Natural killer cell (primary cell): ENCODE measurements at regions of chr16 and their contacts with region 1.

Region 1: DNA sequence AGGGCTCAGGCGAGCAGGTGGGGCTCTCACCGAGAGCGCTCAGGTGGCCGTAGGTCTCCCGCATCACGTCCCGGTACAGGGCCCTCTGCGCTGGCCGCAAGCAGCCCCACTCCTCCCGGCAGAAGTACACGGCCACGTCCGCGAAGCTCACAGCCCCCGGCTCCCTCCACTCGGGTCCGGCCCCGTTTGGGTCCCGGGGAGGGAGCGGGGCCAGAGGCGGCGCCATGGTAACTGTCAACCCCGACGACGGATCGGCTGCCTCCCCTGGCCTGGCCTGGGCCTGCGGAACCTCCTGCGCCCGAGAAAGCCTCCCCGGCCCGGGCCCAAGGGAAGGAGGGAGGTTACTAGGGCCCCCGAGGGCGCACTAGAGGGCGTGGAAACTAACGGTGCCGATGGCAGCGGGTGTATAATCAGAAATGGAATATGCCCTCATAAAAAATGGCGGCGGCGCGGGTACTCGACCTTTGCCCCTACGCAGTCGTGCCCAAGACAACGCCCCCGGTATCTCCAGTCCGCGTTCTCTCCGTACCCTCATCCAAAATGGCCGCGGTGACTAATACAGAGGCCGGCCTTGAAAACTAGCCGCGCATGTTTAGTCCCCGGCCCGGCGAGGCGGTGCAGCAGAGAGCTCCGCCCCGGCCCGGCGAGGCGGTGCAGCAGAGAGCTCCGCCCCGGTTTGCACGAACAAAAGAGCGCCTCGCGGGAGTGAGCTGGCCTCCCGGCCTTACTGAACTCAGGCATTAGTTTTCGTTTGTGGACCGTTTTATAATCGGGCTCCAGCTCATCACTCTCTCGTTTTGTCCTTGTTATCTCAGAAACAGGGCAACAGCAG is at the start of gene ZNF764:
- DNase-seq: peak; percentile 91 to 97
- ATAC-seq: peak; percentile 93 to 98 (median 93)
- H3K4me3 ChIP-seq: peak within 1 kb of the TSS; percentile 77
- H3K4me3 Mint-ChIP-seq: peak within 1 kb of the TSS; percentile 89
- H3K27ac ChIP-seq: peak within 1 kb of the TSS; percentile 90
- H3K27ac Mint-ChIP-seq: peak within 1 kb of the TSS; percentile 89 to 94
- H3K4me1 ChIP-seq: peaks cover 57% of the 10 kb centered on the region
- H3K4me1 Mint-ChIP-seq: peaks cover 31 to 32% of the 10 kb centered on the region in 2 donors
- H3K27me3 ChIP-seq: no peaks in the 10 kb centered on the region
- H3K27me3 Mint-ChIP-seq: peaks cover 0 to 4% of the 10 kb centered on the region in 2 donors
- CTCF ChIP-seq: no peak
- total RNA-seq, gene ZNF764: 9.6 to 13.0 (median 11.7) TPM

Region 2: DNA sequence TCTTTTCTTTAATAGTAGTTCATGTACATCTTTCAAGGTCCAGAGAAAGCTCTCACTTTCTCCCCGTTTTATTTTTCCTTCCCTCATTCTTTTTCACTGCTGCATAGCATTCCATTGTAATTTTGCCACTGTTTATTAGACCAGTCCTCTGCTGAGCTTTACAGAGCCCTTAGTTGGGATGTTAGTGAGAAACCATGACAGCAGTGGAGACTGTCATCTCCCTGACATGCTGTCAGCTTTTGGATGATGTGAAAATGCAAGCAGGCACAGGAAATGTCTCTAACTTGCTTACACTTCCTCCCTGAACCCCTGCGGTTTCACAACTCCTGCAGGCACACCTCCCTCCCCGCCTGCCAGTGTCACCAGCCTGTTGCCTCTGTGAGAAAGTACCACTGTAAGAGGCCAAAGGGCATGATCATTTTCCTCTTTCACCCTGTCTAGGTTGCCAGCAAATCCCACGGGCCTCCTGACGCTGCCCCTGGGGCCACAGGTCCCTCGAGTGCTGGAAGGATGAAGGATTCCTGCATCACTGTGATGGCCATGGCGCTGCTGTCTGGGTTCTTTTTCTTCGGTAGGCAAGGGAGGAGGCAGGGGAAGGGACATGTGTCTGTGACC is 85.7 kb before region 1 on chr16 and contains the start of gene ITGAL:
- intact Hi-C with region 1: no loop called
- DNase-seq: peak; percentile 77 to 93
- ATAC-seq: peak; percentile 75 to 90 (median 86)
- H3K4me3 ChIP-seq: peak within 1 kb of the TSS; percentile 53
- H3K4me3 Mint-ChIP-seq: peak within 1 kb of the TSS; percentile 98
- H3K27ac ChIP-seq: peak within 1 kb of the TSS; percentile 88
- H3K27ac Mint-ChIP-seq: peak within 1 kb of the TSS; percentile 95 to 96
- H3K4me1 ChIP-seq: peaks cover 79% of the 10 kb centered on the region
- H3K4me1 Mint-ChIP-seq: peaks cover 54 to 64% of the 10 kb centered on the region in 2 donors
- H3K27me3 ChIP-seq: no peaks in the 10 kb centered on the region
- H3K27me3 Mint-ChIP-seq: no peaks in the 10 kb centered on the region
- CTCF ChIP-seq: no peak
- total RNA-seq, gene ITGAL: 1,131 to 1,260 (median 1,176) TPM

Region 3: DNA sequence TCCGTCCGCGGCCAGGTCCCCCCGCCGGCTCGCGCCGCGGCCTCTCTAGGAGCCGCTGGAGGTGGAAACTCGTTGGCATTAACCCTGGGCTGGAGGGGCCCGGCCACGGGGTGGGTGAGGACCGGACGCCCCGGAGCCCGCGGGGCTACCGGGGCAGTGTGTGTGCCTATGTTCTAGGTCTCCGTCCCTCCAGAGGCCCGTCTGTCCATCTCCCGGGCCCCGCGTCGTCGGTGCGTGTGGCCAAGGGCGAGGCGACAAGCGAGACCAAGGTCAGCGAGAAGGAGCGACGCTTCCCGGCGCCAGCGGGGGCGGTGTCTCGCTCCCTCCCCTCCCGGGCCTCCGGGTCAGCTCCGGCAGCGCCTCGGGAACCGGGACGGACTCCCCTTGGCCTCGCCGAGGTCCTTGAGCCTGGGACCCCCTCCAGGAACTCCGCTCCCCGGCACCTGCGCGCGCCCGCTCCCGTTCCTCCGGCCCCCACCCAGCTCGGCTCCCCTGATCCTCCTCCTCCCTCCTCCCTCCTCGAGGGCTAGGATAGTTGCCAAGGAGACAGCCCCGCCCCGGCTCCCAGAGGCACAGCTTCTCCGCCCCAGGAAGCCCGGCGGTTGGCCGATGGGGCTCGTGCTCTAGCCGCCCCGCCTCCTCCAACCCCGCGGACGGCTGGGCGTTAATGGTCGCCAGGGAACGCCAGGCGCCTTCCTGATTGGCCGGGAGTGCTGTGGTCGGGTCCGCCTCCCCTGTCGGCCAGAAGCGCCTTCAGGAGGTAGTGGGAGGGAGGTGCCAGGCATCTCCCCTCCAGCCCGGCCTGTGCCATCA is 31.1 kb before region 1 on chr16:
- intact Hi-C with region 1: loop called (anchors 2 kb)
- DNase-seq: peak; percentile 75 to 89
- ATAC-seq: peak; percentile 79 to 90 (median 82)
- H3K4me3 ChIP-seq: peak overlapping the region; percentile 81
- H3K4me3 Mint-ChIP-seq: peak overlapping the region; percentile 84
- H3K27ac ChIP-seq: peak overlapping the region; percentile 75
- H3K27ac Mint-ChIP-seq: peak overlapping the region; percentile 67 to 88
- H3K4me1 ChIP-seq: peaks cover 18% of the 10 kb centered on the region
- H3K4me1 Mint-ChIP-seq: peaks cover 14 to 24% of the 10 kb centered on the region in 2 donors
- H3K27me3 ChIP-seq: no peaks in the 10 kb centered on the region
- H3K27me3 Mint-ChIP-seq: no peaks in the 10 kb centered on the region
- CTCF ChIP-seq: no peak

Region 4: DNA sequence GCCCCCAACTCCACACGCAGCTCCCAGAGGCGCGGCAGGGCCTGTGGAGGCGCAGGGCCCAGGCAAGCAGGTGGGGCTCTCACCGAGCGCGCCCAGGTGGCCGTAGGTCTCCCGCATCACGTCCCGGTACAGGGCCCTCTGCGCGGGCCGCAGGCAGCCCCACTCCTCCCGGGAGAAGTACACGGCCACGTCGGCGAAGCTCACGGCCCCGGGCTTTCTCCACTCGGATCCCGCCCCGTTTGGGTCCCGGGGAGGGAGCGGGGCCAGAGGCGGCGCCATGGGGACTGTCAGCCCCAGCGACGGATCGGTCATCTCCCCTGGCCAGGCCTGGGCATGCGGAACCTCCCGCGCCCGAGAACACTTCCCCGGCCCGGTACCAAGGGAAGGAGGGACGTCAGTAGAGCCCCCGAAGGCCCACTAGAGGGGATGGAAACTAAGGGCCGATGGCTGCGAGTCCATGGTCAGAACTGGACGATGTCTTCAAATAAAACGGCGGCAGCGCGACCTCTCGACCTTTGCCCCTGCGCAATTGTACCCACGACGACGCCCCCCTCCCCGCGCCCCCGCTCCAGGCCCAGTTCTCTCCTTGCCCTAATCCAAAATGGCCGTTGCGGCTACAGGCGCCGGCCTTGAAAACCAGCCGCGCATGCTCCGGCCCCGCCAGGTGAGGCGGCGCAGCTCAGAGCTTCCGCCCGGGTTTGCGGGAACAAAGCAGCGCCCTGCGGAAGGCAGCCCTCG is 23.6 kb before region 1 on chr16 and contains the start of gene ZNF747:
- intact Hi-C with region 1: loop called (anchors 1 kb)
- DNase-seq: peak; percentile 86 to 96
- ATAC-seq: peak; percentile 86 to 93 (median 89)
- H3K4me3 ChIP-seq: peak within 1 kb of the TSS; percentile 87
- H3K4me3 Mint-ChIP-seq: peak within 1 kb of the TSS; percentile 96
- H3K27ac ChIP-seq: peak within 1 kb of the TSS; percentile 94
- H3K27ac Mint-ChIP-seq: peak within 1 kb of the TSS; percentile 83 to 95
- H3K4me1 ChIP-seq: peaks cover 38% of the 10 kb centered on the region
- H3K4me1 Mint-ChIP-seq: peaks cover 22 to 30% of the 10 kb centered on the region in 2 donors
- H3K27me3 ChIP-seq: no peaks in the 10 kb centered on the region
- H3K27me3 Mint-ChIP-seq: no peaks in the 10 kb centered on the region
- CTCF ChIP-seq: no peak
- total RNA-seq, gene ZNF747: 5.0 to 8.6 (median 6.3) TPM

Region 5: GRCh38 chr16:30571695-30572600 is 13.8 kb after region 1 on chr16 and contains the start of gene ZNF688:
- intact Hi-C with region 1: loop called (anchors 1 kb)
- DNase-seq: peak; percentile 91 to 97
- ATAC-seq: peak; percentile 82 to 93 (median 86)
- H3K4me3 ChIP-seq: peak within 1 kb of the TSS; percentile 74
- H3K4me3 Mint-ChIP-seq: peak within 1 kb of the TSS; percentile 93
- H3K27ac ChIP-seq: peak within 1 kb of the TSS; percentile 97
- H3K27ac Mint-ChIP-seq: peak within 1 kb of the TSS; percentile 92 to 95
- H3K4me1 ChIP-seq: peaks cover 42% of the 10 kb centered on the region
- H3K4me1 Mint-ChIP-seq: peaks cover 19 to 29% of the 10 kb centered on the region in 2 donors
- H3K27me3 ChIP-seq: no peaks in the 10 kb centered on the region
- H3K27me3 Mint-ChIP-seq: no peaks in the 10 kb centered on the region
- CTCF ChIP-seq: no peak
- total RNA-seq, gene ZNF688: 10.1 to 16.9 (median 16.5) TPM

Region 6: GRCh38 chr16:30650369-30651123 is 92.4 kb after region 1 on chr16 and contains the start of gene PRR14:
- intact Hi-C with region 1: loop called (anchors 1 kb)
- DNase-seq: peak; percentile 96 to 99
- ATAC-seq: peak; percentile 82 to 95 (median 85)
- H3K4me3 ChIP-seq: peak within 1 kb of the TSS; percentile 94
- H3K4me3 Mint-ChIP-seq: peak within 1 kb of the TSS; percentile 100
- H3K27ac ChIP-seq: peak within 1 kb of the TSS; percentile 96
- H3K27ac Mint-ChIP-seq: peak within 1 kb of the TSS; percentile 95 to 100
- H3K4me1 ChIP-seq: peaks cover 31% of the 10 kb centered on the region
- H3K4me1 Mint-ChIP-seq: peaks cover 31 to 37% of the 10 kb centered on the region in 2 donors
- H3K27me3 ChIP-seq: no peaks in the 10 kb centered on the region
- H3K27me3 Mint-ChIP-seq: no peaks in the 10 kb centered on the region
- CTCF ChIP-seq: no peak
- total RNA-seq, gene PRR14: 81.0 to 110 (median 101) TPM

Region 7: GRCh38 chr16:30657866-30658730 is 99.9 kb after region 1 on chr16 and contains the start of gene FBRS:
- intact Hi-C with region 1: loop called (anchors 1 kb)
- DNase-seq: peak; percentile 99 to 100
- ATAC-seq: peak; percentile 72 to 86 (median 74)
- H3K4me3 ChIP-seq: peak within 1 kb of the TSS; percentile 97
- H3K4me3 Mint-ChIP-seq: peak within 1 kb of the TSS; percentile 98
- H3K27ac ChIP-seq: peak within 1 kb of the TSS; percentile 99
- H3K27ac Mint-ChIP-seq: peak within 1 kb of the TSS; percentile 98 to 99
- H3K4me1 ChIP-seq: peaks cover 39% of the 10 kb centered on the region
- H3K4me1 Mint-ChIP-seq: peaks cover 38 to 52% of the 10 kb centered on the region in 2 donors
- H3K27me3 ChIP-seq: no peaks in the 10 kb centered on the region
- H3K27me3 Mint-ChIP-seq: no peaks in the 10 kb centered on the region
- CTCF ChIP-seq: peak; percentile 77
- total RNA-seq, gene FBRS: 158 to 182 (median 172) TPM